ENCODE measurements at regions of chr3 and their contacts with region 1.

Region 1: DNA sequence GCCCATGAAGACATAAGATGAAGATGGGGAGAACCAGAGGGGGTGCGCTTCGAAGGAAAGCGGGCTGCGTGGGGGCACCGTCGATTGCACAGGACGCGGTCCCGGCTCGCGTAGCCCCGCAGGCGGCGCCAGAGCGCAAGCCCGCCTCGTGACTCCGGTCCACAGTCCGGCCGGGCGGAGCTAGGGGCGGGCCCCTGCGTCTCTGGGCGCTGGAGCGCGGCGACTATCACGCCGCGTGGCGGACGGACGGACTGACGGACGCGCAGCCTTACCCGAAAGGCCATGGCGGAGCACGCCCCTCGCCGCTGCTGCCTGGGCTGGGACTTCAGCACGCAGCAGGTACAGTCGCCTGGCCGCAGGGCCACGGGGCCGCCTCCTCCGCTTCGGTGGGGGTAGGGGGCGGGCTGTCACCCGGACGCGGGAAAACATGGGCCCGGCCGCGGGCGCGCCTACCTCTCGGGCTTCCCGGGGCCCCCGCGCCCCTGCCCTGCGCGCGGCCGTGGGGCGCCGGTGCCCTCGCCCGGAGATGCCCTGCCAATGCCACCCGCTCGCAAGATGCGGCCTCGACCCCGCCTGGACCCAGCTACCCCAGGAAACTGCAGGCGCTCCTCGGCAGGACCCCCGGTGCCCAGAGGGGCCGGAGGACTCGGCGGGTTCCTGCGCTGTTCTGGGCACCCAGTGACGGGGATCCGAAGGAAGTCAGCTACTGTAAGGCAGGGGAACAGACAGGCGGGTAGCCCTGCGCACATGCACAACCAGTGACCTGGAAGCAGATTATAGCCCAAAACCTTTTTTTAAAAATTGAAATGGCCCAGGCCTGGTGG is at the start of gene XYLB:
- DNase-seq: peak; percentile 88 to 89
- ATAC-seq: peak; percentile 98
- H3K4me3 ChIP-seq: peak within 1 kb of the TSS; percentile 58
- H3K27ac ChIP-seq: peak within 1 kb of the TSS; percentile 73 to 91
- H3K4me1 ChIP-seq: peaks cover 6% of the 10 kb centered on the region; the same call in 1 of the 3 replicates
- CTCF ChIP-seq: peak; percentile 89
- EP300 ChIP-seq: no peak
- POLR2A ChIP-seq: peak; percentile 86
- RAD21 ChIP-seq: peak; percentile 52 to 72
- polyA plus RNA-seq, gene XYLB: 5.4 and 6.6 TPM in 2 replicates

Region 2: DNA sequence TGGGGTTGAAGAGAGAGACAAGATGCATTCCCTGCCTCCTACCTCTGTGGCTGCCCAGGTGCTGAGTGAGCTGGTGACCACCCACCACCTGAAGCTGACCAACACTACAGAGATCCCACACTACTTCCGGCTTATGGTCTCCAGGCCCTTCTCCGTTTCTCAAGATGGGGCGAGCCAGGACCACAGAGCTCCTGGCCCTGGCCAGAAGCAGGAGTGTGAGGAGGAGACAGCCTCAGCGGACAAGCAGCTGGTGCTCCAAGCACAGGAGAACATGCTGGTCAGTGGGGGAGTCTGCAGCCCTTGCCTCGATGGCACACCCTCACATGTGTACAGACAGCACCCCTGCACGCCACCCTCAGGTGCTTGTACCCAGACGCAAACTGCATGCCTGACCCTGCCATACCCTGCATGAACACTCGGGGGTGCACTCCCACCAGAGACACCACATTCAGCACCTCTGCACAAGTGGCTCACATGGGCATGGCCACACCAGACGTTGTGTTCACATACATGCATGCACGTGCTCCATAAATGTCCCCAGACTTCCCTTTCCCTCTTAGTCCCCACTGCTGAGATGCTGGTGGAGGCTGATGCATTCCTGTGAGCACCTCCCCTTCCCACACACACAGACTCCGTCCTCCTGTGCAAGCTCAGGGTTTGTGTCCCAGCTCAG is 228.9 kb before region 1 on chr3:
- CTCF ChIA-PET with region 1: interaction called, 10 read pairs
- POLR2A ChIA-PET with region 1: no interaction called
- DNase-seq: peak; percentile 59 to 66
- ATAC-seq: peak; percentile 68 to 84
- H3K4me3 ChIP-seq: no peak overlapping the region
- H3K27ac ChIP-seq: no peak overlapping the region
- H3K4me1 ChIP-seq: no peaks in the 10 kb centered on the region
- CTCF ChIP-seq: peak; percentile 50
- EP300 ChIP-seq: no peak
- POLR2A ChIP-seq: no peak
- RAD21 ChIP-seq: peak; percentile 52 to 80

Region 3: GRCh38 chr3:38253704-38254103 is 93.1 kb before region 1 on chr3:
- CTCF ChIA-PET with region 1: no interaction called
- POLR2A ChIA-PET with region 1: no interaction called
- DNase-seq: no peak
- ATAC-seq: no peak
- H3K4me3 ChIP-seq: no peak overlapping the region
- H3K27ac ChIP-seq: no peak overlapping the region
- H3K4me1 ChIP-seq: no peaks in the 10 kb centered on the region
- CTCF ChIP-seq: no peak
- EP300 ChIP-seq: no peak
- POLR2A ChIP-seq: no peak
- RAD21 ChIP-seq: no peak

Region 4: GRCh38 chr3:38327335-38328009 is 19.3 kb before region 1 on chr3:
- CTCF ChIA-PET with region 1: interaction called, 23 read pairs
- POLR2A ChIA-PET with region 1: no interaction called
- DNase-seq: peak in 1 of 2 experiments; percentile 14
- ATAC-seq: peak in 1 of 2 experiments; percentile 23; a peak in 1 of 6 replicates
- H3K4me3 ChIP-seq: no peak overlapping the region
- H3K27ac ChIP-seq: no peak overlapping the region
- H3K4me1 ChIP-seq: peaks cover 5% of the 10 kb centered on the region; the same call in 1 of the 3 replicates
- CTCF ChIP-seq: no peak
- EP300 ChIP-seq: no peak
- POLR2A ChIP-seq: no peak
- RAD21 ChIP-seq: no peak

Region 5: DNA sequence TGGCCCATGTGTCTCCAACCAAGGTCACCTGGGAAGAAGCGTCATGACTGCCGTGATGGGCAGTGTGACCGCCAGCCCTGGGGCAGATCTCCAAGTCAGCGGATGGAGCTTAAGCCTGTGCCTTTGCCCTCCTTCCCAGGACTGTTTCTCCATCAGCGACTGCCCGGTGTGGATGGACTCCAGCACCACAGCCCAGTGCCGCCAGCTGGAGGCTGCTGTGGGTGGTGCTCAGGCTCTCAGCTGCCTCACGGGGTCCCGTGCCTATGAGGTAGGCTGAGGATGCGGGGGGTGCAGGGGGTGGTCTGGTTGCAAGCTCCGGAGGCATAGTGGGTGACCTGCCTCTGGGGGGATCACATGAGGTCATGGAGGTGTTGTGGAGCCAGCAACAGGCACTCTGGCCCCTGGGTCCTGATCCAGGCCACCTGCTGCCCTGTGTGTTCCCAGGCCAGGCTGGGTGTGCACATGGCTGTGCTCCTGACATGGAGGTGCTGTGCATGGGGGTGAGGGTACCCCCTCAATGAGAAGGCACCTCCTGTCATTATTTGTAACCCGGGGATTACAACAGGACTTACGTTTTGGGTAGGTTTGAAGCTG is 18.8 kb after region 1 on chr3:
- CTCF ChIA-PET with region 1: interaction called, 13 read pairs
- POLR2A ChIA-PET with region 1: no interaction called
- DNase-seq: no peak
- ATAC-seq: no peak
- H3K4me3 ChIP-seq: no peak overlapping the region
- H3K27ac ChIP-seq: no peak overlapping the region
- H3K4me1 ChIP-seq: no peaks in the 10 kb centered on the region
- CTCF ChIP-seq: no peak
- EP300 ChIP-seq: no peak
- POLR2A ChIP-seq: no peak
- RAD21 ChIP-seq: no peak

Region 6: GRCh38 chr3:38453075-38453912 is 106.5 kb after region 1 on chr3 and contains the start of gene ACVR2B:
- CTCF ChIA-PET with region 1: interaction called, 22 read pairs
- POLR2A ChIA-PET with region 1: no interaction called
- DNase-seq: peak; percentile 81 to 83
- ATAC-seq: peak; percentile 65 to 69
- H3K4me3 ChIP-seq: peak within 1 kb of the TSS; percentile 93
- H3K27ac ChIP-seq: peak within 1 kb of the TSS; percentile 96 to 98
- H3K4me1 ChIP-seq: peaks cover 9% of the 10 kb centered on the region; the same call in 2 of the 3 replicates
- CTCF ChIP-seq: no peak
- EP300 ChIP-seq: no peak
- POLR2A ChIP-seq: no peak
- RAD21 ChIP-seq: no peak
- polyA plus RNA-seq, gene ACVR2B: 2.8 and 3.5 TPM in 2 replicates

Region 7: GRCh38 chr3:38479431-38480092 is 132.8 kb after region 1 on chr3:
- CTCF ChIA-PET with region 1: interaction called, 95 read pairs
- POLR2A ChIA-PET with region 1: interaction called, 4 read pairs
- DNase-seq: peak; percentile 66 to 79
- ATAC-seq: peak; percentile 87 to 96
- H3K4me3 ChIP-seq: no peak overlapping the region
- H3K27ac ChIP-seq: no peak overlapping the region
- H3K4me1 ChIP-seq: no peaks in the 10 kb centered on the region
- CTCF ChIP-seq: peak; percentile 87
- EP300 ChIP-seq: no peak
- POLR2A ChIP-seq: no peak
- RAD21 ChIP-seq: peak; percentile 90 to 91

Measured in A549 (cell line).